Posterior vena cava (tissue), 2 donors: ENCODE measurements at regions of chr4 and their contacts with region 1.

Region 1: GRCh38 chr4:2241410-2242353 is at the starts of genes HAUS3 and POLN:
- DNase-seq: peak; percentile 100
- total RNA-seq, gene HAUS3: 9.6 to 11.8 TPM
- total RNA-seq, gene POLN: 2.0 to 3.5 TPM

Region 2: GRCh38 chr4:2963175-2963965 is 721.7 kb after region 1 on chr4 and contains the starts of genes GRK4 and NOP14:
- intact Hi-C with region 1: loop called in 1 of 2 experiments (anchors 10 kb)
- DNase-seq: peak; percentile 100
- total RNA-seq, gene GRK4: 5.6 to 8.0 TPM
- total RNA-seq, gene NOP14: 16.1 to 20.5 TPM